ENCODE measurements at regions of chr7 and their contacts with region 1.

Region 1: GRCh38 chr7:28078036-28078901 is 102.3 kb downstream of the JAZF1 start:
- DNase-seq: peak; percentile 37 to 69
- ATAC-seq: peak; percentile 75; a peak in 5 of 6 replicates
- H3K4me3 ChIP-seq: no peak overlapping the region
- H3K27ac ChIP-seq: peak overlapping the region; percentile 69 to 71
- H3K4me1 ChIP-seq: peaks cover 37% of the 10 kb centered on the region
- CTCF ChIP-seq: peak; percentile 97
- EP300 ChIP-seq: no peak
- POLR2A ChIP-seq: no peak
- RAD21 ChIP-seq: peak; percentile 85 to 90

Region 2: GRCh38 chr7:28029051-28029450 is 49.2 kb before region 1 on chr7:
- CTCF ChIA-PET with region 1: interaction called, 19 read pairs
- POLR2A ChIA-PET with region 1: no interaction called
- DNase-seq: peak in 1 of 2 experiments; percentile 49
- ATAC-seq: peak in 1 of 2 experiments; percentile 69; a peak in 3 of 6 replicates
- H3K4me3 ChIP-seq: no peak overlapping the region
- H3K27ac ChIP-seq: peak overlapping the region; percentile 81 to 90
- H3K4me1 ChIP-seq: peaks cover 56% of the 10 kb centered on the region
- CTCF ChIP-seq: no peak
- EP300 ChIP-seq: peak; percentile 32 to 73; a peak in 2 of 5 replicates
- POLR2A ChIP-seq: no peak
- RAD21 ChIP-seq: no peak

Region 3: DNA sequence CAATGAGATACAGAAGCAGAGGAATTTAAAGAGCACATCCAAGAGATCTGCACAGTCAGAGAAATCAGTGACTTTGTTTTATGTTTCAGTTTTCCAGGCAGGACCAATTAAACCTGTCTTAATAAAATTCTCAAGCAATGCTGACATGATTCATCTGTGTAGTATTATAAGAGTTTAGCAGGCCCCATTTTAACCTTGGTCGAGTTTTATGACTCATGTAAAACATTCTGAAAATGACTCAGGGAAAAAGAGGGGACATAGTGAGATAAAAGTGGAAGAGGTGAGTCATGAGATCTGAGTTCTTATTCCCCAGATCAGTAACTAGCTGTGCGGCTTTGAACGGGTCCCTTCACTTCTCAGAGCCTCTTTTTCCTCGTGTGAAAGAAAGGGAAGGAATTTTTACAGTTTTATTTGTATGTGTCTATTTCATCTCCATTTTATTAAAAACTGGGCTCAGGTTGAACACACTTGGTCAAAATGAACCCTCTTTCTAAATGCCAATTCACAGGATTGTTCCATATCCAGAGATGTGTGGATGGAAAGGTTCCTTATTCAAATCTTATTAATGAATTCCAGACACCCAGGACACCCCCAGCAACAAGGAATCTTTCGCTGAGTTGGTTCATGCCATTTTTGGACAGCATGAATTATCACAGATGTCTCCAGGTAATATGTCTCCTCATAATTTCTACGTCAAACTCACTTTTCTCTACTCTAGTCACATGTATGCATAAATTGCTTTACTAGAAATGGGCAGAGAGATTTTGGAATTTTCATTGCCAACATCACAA is 40.9 kb before region 1 on chr7:
- CTCF ChIA-PET with region 1: interaction called, 20 read pairs
- POLR2A ChIA-PET with region 1: no interaction called
- DNase-seq: peak; percentile 67 to 95
- ATAC-seq: peak; percentile 79 to 85
- H3K4me3 ChIP-seq: peak overlapping the region; percentile 21; the same call in 2 of the 3 replicates
- H3K27ac ChIP-seq: peak overlapping the region; percentile 90 to 92
- H3K4me1 ChIP-seq: peaks cover 93% of the 10 kb centered on the region
- CTCF ChIP-seq: no peak
- EP300 ChIP-seq: peak; percentile 57 to 82; a peak in 2 of 5 replicates
- POLR2A ChIP-seq: no peak
- RAD21 ChIP-seq: 0 out of 5 replicates have a peak, but pooled peaks of 1 of the 2 experiments have one; percentile 22

Region 4: DNA sequence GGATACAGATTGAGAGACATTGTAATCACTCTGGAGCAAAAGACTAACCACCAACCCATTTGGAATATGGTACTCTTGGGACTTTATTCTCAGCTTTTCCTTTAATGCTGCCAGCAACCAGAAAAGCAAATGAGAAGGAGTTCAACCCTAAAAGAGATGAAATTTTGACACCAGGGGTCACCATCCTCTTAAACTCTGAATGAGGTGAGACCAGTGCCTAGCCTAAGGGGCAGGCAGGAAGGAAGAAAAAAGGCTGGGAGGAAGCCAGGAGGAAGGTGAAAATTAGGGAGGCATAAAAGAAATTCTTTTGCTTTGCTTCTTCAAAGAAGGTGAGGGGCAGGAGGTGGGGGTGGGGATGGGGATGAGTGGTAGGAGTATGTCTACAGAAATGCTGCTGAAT is 33.4 kb before region 1 on chr7:
- CTCF ChIA-PET with region 1: interaction called, 25 read pairs
- POLR2A ChIA-PET with region 1: no interaction called
- DNase-seq: no peak
- ATAC-seq: no peak
- H3K4me3 ChIP-seq: no peak overlapping the region
- H3K27ac ChIP-seq: peak overlapping the region; percentile 90 to 92
- H3K4me1 ChIP-seq: peaks cover 46% of the 10 kb centered on the region
- CTCF ChIP-seq: peak; percentile 18; the same call in 1 of the 3 replicates
- EP300 ChIP-seq: no peak
- POLR2A ChIP-seq: no peak
- RAD21 ChIP-seq: peak in 1 of 2 experiments; percentile 42; a peak in 2 of 5 replicates

Region 5: GRCh38 chr7:28055161-28055544 is 23.1 kb before region 1 on chr7:
- CTCF ChIA-PET with region 1: interaction called, 46 read pairs
- POLR2A ChIA-PET with region 1: no interaction called
- DNase-seq: peak in 1 of 2 experiments; percentile 77
- ATAC-seq: peak; percentile 82 to 91
- H3K4me3 ChIP-seq: no peak overlapping the region; the same call in 2 of the 3 replicates
- H3K27ac ChIP-seq: peak overlapping the region; percentile 87 to 92
- H3K4me1 ChIP-seq: peaks cover 58% of the 10 kb centered on the region
- CTCF ChIP-seq: no peak
- EP300 ChIP-seq: no peak; a peak in 1 of 5 replicates
- POLR2A ChIP-seq: no peak
- RAD21 ChIP-seq: no peak

Region 6: GRCh38 chr7:28062197-28062991 is 15.9 kb before region 1 on chr7:
- CTCF ChIA-PET with region 1: interaction called, 46 read pairs
- POLR2A ChIA-PET with region 1: interaction called, 3 read pairs
- DNase-seq: peak; percentile 55 to 81
- ATAC-seq: peak; percentile 95 to 96
- H3K4me3 ChIP-seq: no peak overlapping the region
- H3K27ac ChIP-seq: peak overlapping the region; percentile 68 to 84
- H3K4me1 ChIP-seq: peaks cover 61% of the 10 kb centered on the region
- CTCF ChIP-seq: peak; percentile 75
- EP300 ChIP-seq: no peak
- POLR2A ChIP-seq: no peak
- RAD21 ChIP-seq: peak; percentile 68 to 78